Dorsolateral prefrontal cortex (tissue), 120 donors: ENCODE measurements at regions of chr5 and their contacts with region 1.

Region 1: GRCh38 chr5:172868924-172869591 is 35.0 kb downstream of the ERGIC1 start:
- DNase-seq: peak in 9 of 10 donors; percentile 48 to 91 (median 78)
- H3K4me3 ChIP-seq: peak overlapping the region in 29 of 59 donors; percentile 2 to 51 (median 25)
- H3K27ac ChIP-seq: peak overlapping the region in 58 of 59 donors; percentile 44 to 96 (median 90)
- H3K27me3 ChIP-seq: no peaks in the 10 kb centered on the region
- CTCF ChIP-seq: peak in 25 of 56 donors; percentile 5 to 53 (median 26)

Region 2: DNA sequence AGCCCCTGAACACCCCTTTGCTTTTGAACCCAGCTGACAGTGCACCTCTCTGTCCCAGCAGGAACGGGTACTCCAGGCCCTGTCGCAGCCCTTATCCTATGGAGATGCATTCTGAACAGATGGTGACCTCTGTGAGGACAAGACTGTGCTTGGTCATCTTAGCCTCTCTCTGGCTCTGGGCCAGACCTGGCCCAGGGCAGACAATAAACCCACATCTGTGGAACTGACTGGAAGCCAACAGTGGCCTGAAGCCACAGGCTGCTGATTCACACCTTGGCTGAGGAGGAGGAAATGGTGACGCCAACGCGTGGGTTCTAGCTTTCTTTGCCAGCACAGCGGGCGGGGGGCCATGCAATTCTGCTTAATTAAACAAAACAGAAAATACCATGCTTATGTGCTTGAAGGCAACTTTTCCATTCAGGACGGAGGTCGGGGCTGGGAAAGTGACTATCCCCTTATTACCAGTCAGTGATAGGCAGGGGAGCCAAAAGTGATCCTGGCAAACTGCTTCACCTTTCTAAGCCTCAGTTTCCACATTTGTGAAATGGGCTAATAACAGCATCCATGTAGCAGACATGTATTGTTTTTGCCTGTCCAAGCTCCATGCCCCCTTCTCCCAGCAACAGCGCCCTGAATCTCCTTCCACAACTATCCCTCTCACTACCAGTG is 425.5 kb before region 1 on chr5:
- intact Hi-C with region 1: no loop called
- DNase-seq: peak in 6 of 10 donors; percentile 66 to 81 (median 76)
- H3K4me3 ChIP-seq: no peak overlapping the region
- H3K27ac ChIP-seq: peak overlapping the region in 51 of 59 donors; percentile 2 to 97 (median 49)
- H3K27me3 ChIP-seq: no peaks in the 10 kb centered on the region
- CTCF ChIP-seq: no peak

Region 3: DNA sequence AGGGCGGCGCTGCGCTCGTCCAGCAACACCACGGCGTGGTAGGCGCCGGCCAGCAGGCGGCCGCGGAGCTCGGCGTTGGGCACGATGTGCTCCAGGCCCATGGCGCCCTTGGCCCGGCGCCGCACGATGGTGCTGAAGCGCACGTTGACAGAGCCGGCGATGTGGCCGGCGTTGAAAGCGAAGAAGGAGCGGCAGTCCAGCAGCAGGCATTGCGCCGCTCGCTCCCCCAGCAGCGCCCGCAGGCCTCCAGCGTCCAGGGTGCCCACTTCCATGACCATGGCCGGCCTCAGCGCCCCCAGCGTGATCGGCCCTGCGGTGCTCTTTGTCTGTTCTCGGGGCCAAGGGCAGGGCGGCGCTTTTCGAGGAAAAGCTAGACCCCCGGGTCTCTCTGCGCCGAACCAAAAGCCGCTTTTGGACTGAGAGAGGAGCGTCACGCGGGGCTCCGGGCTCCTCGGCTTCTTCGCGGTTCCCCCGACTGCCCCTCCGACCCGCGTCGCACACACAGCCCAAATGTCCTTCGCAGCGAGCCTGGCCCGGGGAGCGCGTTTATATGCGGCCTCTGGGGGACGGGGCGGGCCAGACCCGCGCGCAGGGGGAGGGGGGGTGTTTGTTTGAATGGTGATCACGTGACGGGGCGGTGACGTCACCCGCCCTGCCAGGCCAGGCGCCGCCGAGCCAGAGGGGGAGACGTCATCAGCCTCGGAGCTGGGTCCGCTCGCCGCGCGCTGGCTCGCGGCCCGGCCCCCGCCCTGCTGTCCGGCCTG is 98.2 kb before region 1 on chr5 and contains the start of gene DUSP1:
- intact Hi-C with region 1: loop called (anchors 1 to 2 kb)
- DNase-seq: peak; percentile 95 to 100 (median 99)
- H3K4me3 ChIP-seq: peak within 1 kb of the TSS; percentile 63 to 99 (median 92)
- H3K27ac ChIP-seq: peak within 1 kb of the TSS; percentile 93 to 100 (median 100)
- H3K27me3 ChIP-seq: no peaks in the 10 kb centered on the region
- CTCF ChIP-seq: peak in 52 of 56 donors; percentile 3 to 74 (median 46)
- total RNA-seq, gene DUSP1: 25.5 to 228 (median 63.6) TPM

Region 4: GRCh38 chr5:172833686-172834414 is 35.2 kb before region 1 on chr5 and contains the start of gene ERGIC1:
- intact Hi-C with region 1: loop called (anchors 5 kb)
- DNase-seq: peak; percentile 73 to 95 (median 84)
- H3K4me3 ChIP-seq: peak within 1 kb of the TSS; percentile 69 to 94 (median 83)
- H3K27ac ChIP-seq: peak within 1 kb of the TSS; percentile 6 to 92 (median 80)
- H3K27me3 ChIP-seq: no peaks in the 10 kb centered on the region
- CTCF ChIP-seq: peak in 5 of 56 donors; percentile 11 to 25 (median 14)
- total RNA-seq, gene ERGIC1: 48.4 to 109 (median 68.1) TPM

Region 5: DNA sequence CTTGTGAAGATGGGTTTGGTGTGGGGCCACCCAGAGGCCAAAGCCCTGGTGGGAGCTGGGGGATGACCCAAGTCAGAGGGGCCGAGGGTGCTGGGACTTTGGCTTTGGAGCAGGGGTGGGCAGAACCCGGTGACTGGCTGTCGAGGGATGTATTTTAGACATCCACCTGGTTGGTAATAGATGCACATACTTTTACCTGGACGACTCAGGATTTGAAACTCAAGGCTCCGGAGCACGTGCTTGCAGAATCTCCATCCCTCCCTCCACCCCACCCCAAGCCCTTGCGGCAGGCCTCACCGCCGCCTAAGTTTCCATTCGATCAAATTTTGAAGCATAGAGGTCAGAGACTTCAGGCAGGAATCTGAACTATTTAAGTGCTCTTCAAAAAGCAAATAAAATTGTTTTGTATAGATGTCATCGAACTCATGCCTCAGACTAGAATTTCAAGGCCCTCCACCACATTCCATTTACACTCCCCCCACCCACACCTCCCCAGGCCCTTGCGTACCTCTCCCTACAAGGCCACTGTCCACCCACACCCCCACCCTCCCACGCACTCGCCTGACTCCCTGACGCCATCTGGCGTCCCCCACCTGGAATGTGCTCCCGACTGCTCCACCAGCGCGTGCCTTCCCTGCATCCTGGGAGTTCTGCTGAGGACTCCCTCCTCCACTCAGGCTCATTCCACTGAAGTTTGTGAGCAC is 33.6 kb after region 1 on chr5:
- intact Hi-C with region 1: loop called in 1 of 2 experiments (anchors 5 kb)
- DNase-seq: peak in 7 of 10 donors; percentile 36 to 71 (median 61)
- H3K4me3 ChIP-seq: no peak overlapping the region
- H3K27ac ChIP-seq: peak overlapping the region in 39 of 59 donors; percentile 7 to 91 (median 48)
- H3K27me3 ChIP-seq: no peaks in the 10 kb centered on the region
- CTCF ChIP-seq: peak in 47 of 56 donors; percentile 11 to 64 (median 37)

Region 6: GRCh38 chr5:172920447-172920849 is 51.4 kb after region 1 on chr5:
- intact Hi-C with region 1: loop called in 1 of 2 experiments (anchors 10 kb)
- DNase-seq: peak in 6 of 10 donors; percentile 57 to 86 (median 72)
- H3K4me3 ChIP-seq: no peak overlapping the region
- H3K27ac ChIP-seq: peak overlapping the region in 42 of 59 donors; percentile 9 to 84 (median 57)
- H3K27me3 ChIP-seq: no peaks in the 10 kb centered on the region
- CTCF ChIP-seq: no peak

Region 7: GRCh38 chr5:172932313-172933017 is 63.4 kb after region 1 on chr5:
- intact Hi-C with region 1: loop called (anchors 5 to 10 kb)
- DNase-seq: peak; percentile 61 to 85 (median 76)
- H3K4me3 ChIP-seq: peak overlapping the region in 3 of 59 donors; percentile 9 to 14 (median 10)
- H3K27ac ChIP-seq: peak overlapping the region in 47 of 59 donors; percentile 10 to 85 (median 57)
- H3K27me3 ChIP-seq: no peaks in the 10 kb centered on the region
- CTCF ChIP-seq: peak; percentile 90 to 99 (median 98)

Region 8: DNA sequence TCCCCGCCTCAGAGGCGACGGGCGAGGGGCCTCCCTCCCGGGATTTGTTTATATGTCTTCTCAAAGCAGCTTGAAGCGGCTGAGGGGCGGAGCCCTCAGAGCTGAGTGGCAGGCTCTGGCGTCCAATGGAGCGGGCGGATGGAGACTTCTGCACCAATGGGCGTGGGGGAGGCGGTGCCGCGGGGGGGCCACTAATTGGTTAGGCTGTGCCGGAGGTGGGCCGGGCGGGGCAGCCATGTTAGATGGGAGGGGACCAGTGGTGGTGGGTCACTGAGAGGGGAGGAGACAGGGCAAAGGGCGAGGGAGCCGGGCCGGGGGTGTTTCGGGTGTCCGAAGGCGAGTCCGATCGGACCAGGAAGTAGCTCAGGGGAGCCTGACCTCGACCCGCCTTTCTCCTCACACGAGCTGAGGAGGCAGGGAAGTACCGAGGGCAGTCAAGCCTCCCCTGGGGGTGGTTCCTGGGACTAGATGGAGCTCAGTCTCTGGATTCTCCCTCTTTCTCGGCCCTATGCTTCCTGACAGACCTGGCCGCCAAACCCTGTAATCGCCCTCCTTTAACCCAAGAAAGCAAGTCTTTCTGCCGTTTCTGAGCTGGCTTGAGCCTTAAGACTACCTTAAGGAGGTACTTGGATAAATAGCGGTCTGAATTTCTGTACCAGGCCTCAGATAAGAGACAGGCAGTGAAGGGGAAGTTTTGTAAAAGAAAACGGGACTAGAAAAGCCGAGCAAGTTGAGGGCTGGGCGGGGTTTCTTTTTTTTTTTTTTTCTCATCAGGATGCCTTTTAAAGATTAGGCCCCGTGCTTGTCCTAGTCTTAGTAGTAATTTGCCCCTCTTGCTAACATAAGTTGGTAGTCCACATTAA is 188.2 kb after region 1 on chr5:
- intact Hi-C with region 1: no loop called
- DNase-seq: peak; percentile 97 to 99 (median 98)
- H3K4me3 ChIP-seq: peak overlapping the region; percentile 73 to 100 (median 95)
- H3K27ac ChIP-seq: peak overlapping the region; percentile 93 to 100 (median 99)
- H3K27me3 ChIP-seq: no peaks in the 10 kb centered on the region
- CTCF ChIP-seq: peak in 25 of 56 donors; percentile 7 to 42 (median 18)